PC-9 (cell line): ENCODE measurements at regions of chr15 and their contacts with region 1.

Region 1: GRCh38 chr15:43225201-43225949 is 4.6 kb upstream of the EPB42 start:
- DNase-seq: peak; percentile 43 to 45
- H3K4me3 ChIP-seq: no peak overlapping the region
- H3K27ac ChIP-seq: no peak overlapping the region
- H3K4me1 ChIP-seq: peaks cover 13% of the 10 kb centered on the region
- H3K27me3 ChIP-seq: no peaks in the 10 kb centered on the region
- CTCF ChIP-seq: peak; percentile 82

Region 2: DNA sequence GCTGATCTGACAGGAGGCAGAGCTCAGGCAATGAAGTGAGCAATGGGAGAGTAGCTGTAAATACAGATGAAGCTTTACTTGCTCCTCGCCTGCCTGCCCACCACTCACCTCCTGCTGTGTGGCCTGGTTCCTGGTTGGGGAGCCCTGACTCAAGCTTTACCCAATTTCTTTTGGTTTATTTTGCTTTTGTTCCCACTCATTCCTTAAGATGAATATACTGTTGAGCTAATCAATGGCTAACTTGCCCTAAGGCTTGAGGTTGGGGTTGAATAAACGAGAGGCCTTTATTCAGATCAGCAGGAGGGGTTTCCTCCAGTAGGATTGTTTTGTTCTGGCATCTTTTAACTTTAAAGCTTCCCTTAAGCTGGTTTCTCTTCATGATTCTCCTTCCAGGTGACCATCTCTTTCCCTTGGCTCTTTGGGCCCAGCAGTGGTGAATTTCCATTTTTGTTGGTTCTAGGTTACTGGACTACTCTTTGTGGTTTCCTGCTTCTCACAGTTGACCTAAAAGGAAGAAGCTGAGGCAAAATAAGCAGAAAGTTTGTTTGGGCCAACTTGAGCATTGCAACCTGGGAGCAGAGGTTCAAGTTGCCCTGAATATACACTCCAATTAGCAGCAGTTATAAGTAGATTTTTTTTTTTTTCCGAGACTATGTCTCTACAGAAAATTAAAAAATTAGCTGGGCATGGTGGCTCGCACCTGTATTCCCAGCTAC is 605.6 kb before region 1 on chr15:
- CTCF ChIA-PET with region 1: no interaction called
- POLR2A ChIA-PET with region 1: no interaction called
- intact Hi-C with region 1: no loop called
- DNase-seq: no peak
- H3K4me3 ChIP-seq: no peak overlapping the region
- H3K27ac ChIP-seq: no peak overlapping the region
- H3K4me1 ChIP-seq: no peaks in the 10 kb centered on the region
- H3K27me3 ChIP-seq: no peaks in the 10 kb centered on the region
- CTCF ChIP-seq: no peak

Region 3: DNA sequence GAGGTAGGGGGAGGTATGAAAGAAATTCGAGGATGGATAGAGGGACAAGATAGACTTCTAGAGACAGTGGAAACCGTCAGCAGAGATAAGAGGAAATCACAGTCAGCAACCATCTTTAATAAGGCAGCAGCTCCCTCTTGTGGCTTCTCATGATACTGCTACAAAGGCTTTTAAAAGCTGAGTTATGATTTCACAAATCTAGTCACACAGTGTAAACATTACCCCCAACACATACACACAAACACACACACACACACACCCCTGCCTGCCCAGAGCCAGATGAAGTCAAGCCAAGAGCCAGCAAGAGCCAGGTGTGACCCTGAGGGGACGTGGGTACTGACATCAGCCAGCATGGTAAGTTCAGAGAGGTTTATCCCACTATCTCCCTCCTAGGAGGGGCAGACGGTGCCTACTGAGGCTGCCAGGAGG is 60.2 kb after region 1 on chr15:
- CTCF ChIA-PET with region 1: interaction called, 30 read pairs
- POLR2A ChIA-PET with region 1: no interaction called
- intact Hi-C with region 1: loop called (anchors 1 kb)
- DNase-seq: peak; percentile 45 to 46
- H3K4me3 ChIP-seq: no peak overlapping the region
- H3K27ac ChIP-seq: no peak overlapping the region
- H3K4me1 ChIP-seq: peaks cover 9% of the 10 kb centered on the region
- H3K27me3 ChIP-seq: no peaks in the 10 kb centered on the region
- CTCF ChIP-seq: peak; percentile 87

Region 4: GRCh38 chr15:43370975-43371974 is 145.9 kb after region 1 on chr15 and contains the starts of genes TUBGCP4 and ZSCAN29:
- CTCF ChIA-PET with region 1: no interaction called
- POLR2A ChIA-PET with region 1: interaction called, 11 read pairs
- intact Hi-C with region 1: no loop called
- DNase-seq: peak; percentile 58 to 83
- H3K4me3 ChIP-seq: peak within 1 kb of the TSS; percentile 59
- H3K27ac ChIP-seq: peak within 1 kb of the TSS; percentile 19; the same call in 1 of the 2 replicates
- H3K4me1 ChIP-seq: peaks cover 20% of the 10 kb centered on the region
- H3K27me3 ChIP-seq: no peaks in the 10 kb centered on the region
- CTCF ChIP-seq: peak; percentile 55; the same call in 1 of the 2 replicates
- total RNA-seq, gene TUBGCP4: 25.3 and 30.8 TPM in 2 replicates
- total RNA-seq, gene ZSCAN29: 36.3 and 37.9 TPM in 2 replicates

Region 5: GRCh38 chr15:43390723-43391122 is 165.3 kb after region 1 on chr15:
- CTCF ChIA-PET with region 1: no interaction called
- POLR2A ChIA-PET with region 1: no interaction called
- intact Hi-C with region 1: no loop called
- DNase-seq: no peak
- H3K4me3 ChIP-seq: no peak overlapping the region
- H3K27ac ChIP-seq: no peak overlapping the region
- H3K4me1 ChIP-seq: no peaks in the 10 kb centered on the region
- H3K27me3 ChIP-seq: no peaks in the 10 kb centered on the region
- CTCF ChIP-seq: no peak